Activated CD4-positive, alpha-beta T cell treated with anti-CD3 and anti-CD28 coated beads for 36 hours (primary cell): ENCODE measurements at regions of chr6 and their contacts with region 1.

Region 1: DNA sequence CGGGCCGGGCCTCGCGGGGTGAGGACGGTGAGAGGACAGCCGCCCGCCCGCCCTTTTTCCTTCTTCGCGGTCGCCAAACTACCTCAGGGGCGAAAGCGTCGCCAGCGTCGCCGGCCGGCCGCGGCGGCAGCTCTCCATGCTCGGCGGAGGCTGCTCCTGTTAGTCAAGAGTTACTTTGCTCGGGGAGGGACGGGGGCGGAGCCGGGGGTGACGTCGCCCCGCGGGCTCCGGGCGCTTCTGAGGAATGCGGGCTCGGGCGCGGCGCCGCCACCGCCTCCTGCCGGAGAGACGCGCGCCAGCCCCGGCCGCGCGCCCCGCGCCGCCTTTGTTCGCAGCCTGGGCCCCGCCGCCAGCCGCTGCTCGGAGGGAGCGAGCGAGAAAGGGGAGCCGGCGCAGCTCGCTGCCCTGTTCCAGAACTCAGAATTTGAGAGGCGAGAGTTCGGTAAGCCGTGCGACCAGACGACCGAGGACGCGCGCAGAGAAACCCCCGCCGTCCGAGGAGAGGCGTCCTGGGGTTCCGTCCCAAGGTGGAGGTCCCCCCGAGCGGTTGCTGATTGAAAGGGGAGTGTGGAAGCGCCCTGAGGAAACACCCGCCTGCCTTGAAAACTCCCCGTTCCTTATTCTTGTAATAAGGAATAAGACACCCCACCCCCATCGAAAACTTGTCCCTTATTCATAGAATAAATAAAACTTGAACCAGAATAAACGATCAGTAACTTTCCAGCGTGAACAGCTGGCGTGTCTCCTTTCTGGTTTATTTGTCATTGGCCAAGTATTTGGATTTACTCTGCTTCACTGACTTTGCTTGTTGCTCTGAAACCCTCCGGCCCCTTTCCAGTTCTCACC is at the start of gene PTPRK:
- DNase-seq: peak; percentile 94
- ATAC-seq: peak; percentile 92
- H3K4me3 Mint-ChIP-seq: peak within 1 kb of the TSS; percentile 90
- H3K27ac Mint-ChIP-seq: peak within 1 kb of the TSS; percentile 66
- H3K4me1 Mint-ChIP-seq: peaks cover 18% of the 10 kb centered on the region
- H3K27me3 Mint-ChIP-seq: peaks cover 31% of the 10 kb centered on the region
- total RNA-seq, gene PTPRK: 4.1 to 5.0 TPM

Region 2: GRCh38 chr6:127737009-127737486 is 783.6 kb before region 1 on chr6:
- CTCF ChIA-PET with region 1: interaction called, 8 read pairs
- POLR2A ChIA-PET with region 1: no interaction called
- intact Hi-C with region 1: loop called (anchors 2 to 5 kb)
- DNase-seq: peak; percentile 42
- ATAC-seq: peak; percentile 90
- H3K4me3 Mint-ChIP-seq: no peak overlapping the region
- H3K27ac Mint-ChIP-seq: peak overlapping the region; percentile 29
- H3K4me1 Mint-ChIP-seq: peaks cover 44% of the 10 kb centered on the region
- H3K27me3 Mint-ChIP-seq: no peaks in the 10 kb centered on the region

Region 3: GRCh38 chr6:128259730-128260685 is 260.7 kb before region 1 on chr6:
- CTCF ChIA-PET with region 1: no interaction called
- POLR2A ChIA-PET with region 1: no interaction called
- intact Hi-C with region 1: loop called in 1 of 2 experiments (anchors 5 kb)
- DNase-seq: no peak
- ATAC-seq: peak; percentile 54
- H3K4me3 Mint-ChIP-seq: peak overlapping the region; percentile 62
- H3K27ac Mint-ChIP-seq: peak overlapping the region; percentile 51
- H3K4me1 Mint-ChIP-seq: peaks cover 29% of the 10 kb centered on the region
- H3K27me3 Mint-ChIP-seq: no peaks in the 10 kb centered on the region

Region 4: GRCh38 chr6:128725271-128726233 is 204.9 kb after region 1 on chr6:
- CTCF ChIA-PET with region 1: no interaction called
- POLR2A ChIA-PET with region 1: no interaction called
- intact Hi-C with region 1: loop called (anchors 5 to 10 kb)
- DNase-seq: peak; percentile 40
- ATAC-seq: no peak
- H3K4me3 Mint-ChIP-seq: no peak overlapping the region
- H3K27ac Mint-ChIP-seq: no peak overlapping the region
- H3K4me1 Mint-ChIP-seq: no peaks in the 10 kb centered on the region
- H3K27me3 Mint-ChIP-seq: peaks cover 30% of the 10 kb centered on the region